Astrocyte of the cerebellum (primary cell): ENCODE measurements at regions of chr4 and their contacts with region 1.

Region 1: DNA sequence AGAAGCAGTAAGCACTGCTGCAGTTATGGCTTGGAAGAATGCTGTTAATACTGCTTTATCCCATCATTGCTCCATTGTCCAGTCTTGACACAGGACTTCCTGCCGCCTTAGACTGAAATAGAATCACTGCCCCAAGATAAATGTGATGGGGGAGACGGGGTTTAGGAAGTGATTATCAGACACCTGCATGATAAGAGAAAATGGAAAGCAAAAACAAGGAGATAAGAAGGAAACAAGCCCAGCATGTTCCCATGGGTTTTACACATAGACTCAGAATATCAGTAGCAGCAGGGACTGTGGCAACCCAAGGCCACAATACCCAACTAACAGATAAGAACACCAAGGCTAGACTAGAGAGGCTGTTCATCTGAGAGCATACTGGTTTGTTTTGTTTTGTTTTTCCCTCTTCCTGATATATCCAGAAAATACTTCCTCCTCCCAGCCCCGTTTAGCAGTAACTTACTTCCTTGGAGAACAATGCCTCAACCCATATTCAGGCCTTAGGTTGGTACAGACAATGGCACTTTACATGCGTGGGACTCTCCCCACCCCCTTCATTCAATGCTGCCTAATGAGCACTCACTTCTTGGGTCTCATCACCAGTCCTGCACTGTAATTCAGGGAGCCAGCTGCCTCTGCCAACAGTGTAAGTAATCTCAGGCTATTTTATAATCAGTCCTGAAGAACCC is 232.6 kb downstream of the CBR4 start:
- DNase-seq: no peak
- H3K4me3 ChIP-seq: no peak overlapping the region
- CTCF ChIP-seq: no peak

Region 2: DNA sequence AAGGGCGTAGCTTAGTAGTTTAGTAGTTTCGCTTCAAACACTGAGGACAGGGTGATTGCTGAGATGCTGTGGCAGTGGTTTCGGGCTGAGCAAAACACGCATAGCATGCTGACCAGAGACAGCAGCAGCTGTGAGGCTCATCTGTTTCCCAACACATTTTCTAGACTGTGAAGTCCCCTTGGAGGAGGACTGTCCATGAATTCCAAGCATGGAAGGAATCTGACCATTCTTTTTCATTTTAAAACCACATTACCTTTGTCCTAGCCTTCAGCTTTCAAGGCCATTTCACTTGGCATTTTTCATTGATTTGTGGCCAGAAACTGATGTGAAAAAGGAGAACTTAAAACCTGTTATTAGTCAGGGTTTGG is 39.6 kb before region 1 on chr4:
- in situ Hi-C with region 1: loop called (anchors 5 kb)
- DNase-seq: peak; percentile 94
- H3K4me3 ChIP-seq: no peak overlapping the region
- CTCF ChIP-seq: no peak